ENCODE measurements at regions of chr10 and their contacts with region 1.

Region 1: GRCh38 chr10:61896854-61897661 is 4.4 kb upstream of the ARID5B start:
- DNase-seq: peak; percentile 58
- H3K4me3 ChIP-seq: peak overlapping the region in 1 of 4 donors; percentile 20
- H3K27ac ChIP-seq: peak overlapping the region; percentile 98
- H3K4me1 ChIP-seq: peaks cover 6 to 39% (median 30%) of the 10 kb centered on the region in 4 donors
- H3K27me3 ChIP-seq: no peaks in the 10 kb centered on the region
- CTCF ChIP-seq: peak; percentile 63 to 81 (median 65)
- EP300 ChIP-seq: no peak
- POLR2A ChIP-seq: no peak

Region 2: DNA sequence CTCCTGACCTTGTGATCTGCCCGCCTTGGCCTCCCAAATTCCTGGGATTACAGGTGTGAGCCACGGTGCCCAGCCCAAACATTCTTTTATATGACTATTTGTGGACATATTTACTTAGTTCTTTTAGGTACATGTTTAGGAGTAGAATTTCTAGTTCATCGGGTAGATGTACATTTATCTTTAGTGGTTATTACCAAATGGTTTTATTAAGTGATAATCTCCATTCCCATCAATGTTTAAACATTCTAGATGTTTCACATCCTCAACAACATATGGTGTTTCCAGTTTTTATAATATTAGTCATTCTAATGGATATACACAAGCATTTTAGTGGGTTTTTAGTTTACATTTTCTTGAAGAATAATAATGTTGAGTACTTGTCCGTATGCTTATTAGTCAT is 239.8 kb after region 1 on chr10:
- in situ Hi-C with region 1: no loop called
- intact Hi-C with region 1: no loop called
- DNase-seq: no peak
- H3K4me3 ChIP-seq: no peak overlapping the region
- H3K27ac ChIP-seq: no peak overlapping the region
- H3K4me1 ChIP-seq: no peaks in the 10 kb centered on the region
- H3K27me3 ChIP-seq: no peaks in the 10 kb centered on the region
- CTCF ChIP-seq: no peak
- EP300 ChIP-seq: no peak
- POLR2A ChIP-seq: no peak

Region 3: DNA sequence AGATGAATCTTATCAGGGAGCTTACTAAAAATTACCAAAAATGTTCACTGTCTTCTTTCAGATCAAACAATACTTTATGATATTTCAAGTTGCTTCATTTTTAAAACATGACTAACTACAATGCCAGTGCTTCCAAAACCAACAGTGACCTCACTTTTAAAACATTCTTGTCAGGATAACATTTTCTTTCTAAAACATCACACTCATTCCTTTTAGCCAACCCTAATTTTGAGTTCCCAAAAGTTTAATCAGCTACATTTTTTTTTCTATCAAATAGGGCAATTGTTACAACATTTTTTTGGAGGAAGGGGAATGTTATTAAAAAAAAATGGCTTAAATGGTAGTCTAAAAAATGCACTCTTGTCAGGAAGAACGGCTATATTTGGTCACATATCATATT is 334.3 kb after region 1 on chr10:
- in situ Hi-C with region 1: loop called in 1 of 4 experiments (anchors 10 kb)
- intact Hi-C with region 1: no loop called
- DNase-seq: no peak
- H3K4me3 ChIP-seq: no peak overlapping the region
- H3K27ac ChIP-seq: no peak overlapping the region
- H3K4me1 ChIP-seq: peaks cover 0 to 6% (median 3%) of the 10 kb centered on the region in 4 donors
- H3K27me3 ChIP-seq: no peaks in the 10 kb centered on the region
- CTCF ChIP-seq: no peak
- EP300 ChIP-seq: no peak
- POLR2A ChIP-seq: no peak

Region 4: GRCh38 chr10:62250594-62251198 is 353.6 kb after region 1 on chr10:
- in situ Hi-C with region 1: loop called in 3 of 4 experiments (anchors 10 kb)
- intact Hi-C with region 1: no loop called
- DNase-seq: no peak
- H3K4me3 ChIP-seq: no peak overlapping the region
- H3K27ac ChIP-seq: no peak overlapping the region
- H3K4me1 ChIP-seq: no peaks in the 10 kb centered on the region
- H3K27me3 ChIP-seq: no peaks in the 10 kb centered on the region
- CTCF ChIP-seq: no peak
- EP300 ChIP-seq: no peak
- POLR2A ChIP-seq: no peak